CD14-positive monocyte (primary cell): ENCODE measurements at regions of chr17 and their contacts with region 1.

Region 1: GRCh38 chr17:31294820-31295488 is 2.1 kb downstream of the OMG start:
- DNase-seq: no peak
- H3K4me3 ChIP-seq: no peak overlapping the region
- H3K4me3 Mint-ChIP-seq: no peak overlapping the region
- H3K27ac ChIP-seq: no peak overlapping the region
- H3K27ac Mint-ChIP-seq: no peak overlapping the region
- H3K4me1 ChIP-seq: peaks cover 0 to 11% of the 10 kb centered on the region in 2 donors
- H3K4me1 Mint-ChIP-seq: peaks cover 13% of the 10 kb centered on the region
- H3K27me3 ChIP-seq: no peaks in the 10 kb centered on the region
- H3K27me3 Mint-ChIP-seq: no peaks in the 10 kb centered on the region
- CTCF ChIP-seq: no peak

Region 2: GRCh38 chr17:31369266-31369665 is 74.3 kb after region 1 on chr17:
- intact Hi-C with region 1: loop called in 1 of 2 experiments (anchors 10 kb)
- DNase-seq: no peak
- H3K4me3 ChIP-seq: no peak overlapping the region
- H3K4me3 Mint-ChIP-seq: no peak overlapping the region
- H3K27ac ChIP-seq: no peak overlapping the region
- H3K27ac Mint-ChIP-seq: no peak overlapping the region
- H3K4me1 ChIP-seq: peaks cover 28 to 31% of the 10 kb centered on the region in 2 donors
- H3K4me1 Mint-ChIP-seq: peaks cover 33% of the 10 kb centered on the region
- H3K27me3 ChIP-seq: no peaks in the 10 kb centered on the region
- H3K27me3 Mint-ChIP-seq: no peaks in the 10 kb centered on the region
- CTCF ChIP-seq: no peak